ENCODE measurements at regions of chr20 and their contacts with region 1.

Region 1: GRCh38 chr20:44310664-44311639 is at the start of gene FITM2:
- DNase-seq: peak; percentile 99
- ATAC-seq: peak; percentile 96
- H3K4me3 Mint-ChIP-seq: peak within 1 kb of the TSS; percentile 86
- H3K27ac Mint-ChIP-seq: peak within 1 kb of the TSS; percentile 66
- H3K4me1 Mint-ChIP-seq: peaks cover 17% of the 10 kb centered on the region
- H3K27me3 Mint-ChIP-seq: no peaks in the 10 kb centered on the region
- total RNA-seq, gene FITM2: 2.1 to 2.2 TPM

Region 2: GRCh38 chr20:44109951-44110361 is 201.0 kb before region 1 on chr20:
- CTCF ChIA-PET with region 1: no interaction called
- POLR2A ChIA-PET with region 1: no interaction called
- intact Hi-C with region 1: loop called in 1 of 2 experiments (anchors 10 kb)
- DNase-seq: no peak
- ATAC-seq: no peak
- H3K4me3 Mint-ChIP-seq: no peak overlapping the region
- H3K27ac Mint-ChIP-seq: no peak overlapping the region
- H3K4me1 Mint-ChIP-seq: no peaks in the 10 kb centered on the region
- H3K27me3 Mint-ChIP-seq: peaks cover 39% of the 10 kb centered on the region

Region 3: DNA sequence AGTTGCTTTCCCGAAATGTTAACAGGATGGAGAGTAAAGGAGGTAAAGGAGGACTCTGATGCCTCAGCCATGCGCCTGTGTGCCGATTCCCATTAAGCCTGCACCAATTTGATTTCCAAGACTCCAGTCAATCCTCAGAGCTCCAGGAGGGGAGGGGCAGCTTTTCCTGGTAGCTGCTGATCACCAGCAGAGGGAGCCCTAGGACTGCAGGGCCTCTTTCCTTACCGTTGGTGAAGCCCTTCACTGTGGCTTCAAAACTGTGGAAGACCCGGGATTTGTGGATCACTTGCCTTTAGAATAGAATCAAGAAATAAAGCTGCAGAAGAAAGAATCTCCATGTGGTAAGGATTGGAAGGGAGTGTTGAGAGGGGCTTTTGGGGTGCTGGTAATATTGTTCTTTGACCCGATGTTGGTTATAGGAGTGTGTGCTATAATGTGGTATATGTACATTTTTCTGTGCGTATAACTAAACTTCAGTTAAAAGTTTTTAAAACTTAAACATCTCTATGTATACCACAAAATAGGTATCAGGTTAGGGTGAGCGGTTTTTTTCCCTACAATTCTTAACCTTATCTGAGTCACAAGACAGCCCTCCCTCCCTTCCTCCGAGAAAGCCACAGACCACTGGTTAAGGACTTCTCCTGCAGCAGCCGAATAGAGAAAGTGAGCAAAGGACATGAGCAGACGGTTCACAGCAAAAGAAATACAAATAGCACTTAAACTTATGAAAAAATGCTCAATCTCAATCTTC is 93.4 kb before region 1 on chr20:
- CTCF ChIA-PET with region 1: interaction called, 346 read pairs
- POLR2A ChIA-PET with region 1: interaction called, 11 read pairs
- intact Hi-C with region 1: loop called (anchors 1 kb)
- DNase-seq: peak; percentile 82
- ATAC-seq: peak; percentile 46
- H3K4me3 Mint-ChIP-seq: peak overlapping the region; percentile 65
- H3K27ac Mint-ChIP-seq: peak overlapping the region; percentile 83
- H3K4me1 Mint-ChIP-seq: peaks cover 50% of the 10 kb centered on the region
- H3K27me3 Mint-ChIP-seq: no peaks in the 10 kb centered on the region

Region 4: GRCh38 chr20:44326391-44327159 is 15.6 kb after region 1 on chr20:
- CTCF ChIA-PET with region 1: interaction called, 27 read pairs
- POLR2A ChIA-PET with region 1: no interaction called
- intact Hi-C with region 1: loop called in 1 of 2 experiments (anchors 1 kb)
- DNase-seq: peak; percentile 56
- ATAC-seq: peak; percentile 64
- H3K4me3 Mint-ChIP-seq: no peak overlapping the region
- H3K27ac Mint-ChIP-seq: no peak overlapping the region
- H3K4me1 Mint-ChIP-seq: no peaks in the 10 kb centered on the region
- H3K27me3 Mint-ChIP-seq: peaks cover 7% of the 10 kb centered on the region

Region 5: DNA sequence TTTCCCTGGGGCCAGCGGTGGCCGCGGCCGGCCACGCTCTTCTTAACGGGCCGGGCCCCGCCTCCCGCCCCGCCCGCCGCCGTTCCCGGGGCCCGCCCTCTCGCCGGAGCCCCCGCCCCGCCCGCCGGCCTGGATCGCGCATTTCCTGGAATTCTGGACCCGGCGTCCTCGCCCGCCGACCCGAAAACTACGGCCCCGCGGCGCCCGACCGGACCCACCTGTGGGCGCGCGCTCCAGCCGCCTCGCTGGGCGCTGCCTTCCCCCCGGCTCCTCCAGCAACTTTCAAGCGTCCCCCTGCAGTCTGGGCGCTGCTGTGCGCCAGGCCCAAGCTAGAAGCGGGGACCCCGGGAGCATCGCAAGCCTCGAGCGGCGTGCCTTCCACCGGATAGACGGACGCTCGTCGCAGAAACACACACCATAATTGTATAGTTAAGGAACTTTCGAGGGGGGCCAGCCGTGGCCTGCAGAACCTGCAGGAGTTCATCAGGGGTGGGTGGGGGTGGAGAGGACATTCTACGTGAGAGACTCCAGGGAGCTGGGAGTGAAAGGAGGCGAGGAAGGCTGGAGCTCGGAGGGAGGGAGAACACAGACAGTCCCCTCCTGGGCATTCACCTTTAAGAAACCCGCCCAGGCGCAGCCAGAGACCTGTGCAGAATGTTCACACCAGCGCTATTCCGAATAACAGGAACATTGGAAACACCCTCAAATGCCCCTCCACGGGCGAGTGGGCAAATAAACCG is 340.9 kb after region 1 on chr20 and contains the start of gene ADA:
- CTCF ChIA-PET with region 1: no interaction called
- POLR2A ChIA-PET with region 1: interaction called, 5 read pairs
- intact Hi-C with region 1: loop called in 1 of 2 experiments (anchors 5 kb)
- DNase-seq: peak; percentile 65
- ATAC-seq: peak; percentile 48
- H3K4me3 Mint-ChIP-seq: peak within 1 kb of the TSS; percentile 78
- H3K27ac Mint-ChIP-seq: peak within 1 kb of the TSS; percentile 89
- H3K4me1 Mint-ChIP-seq: peaks cover 50% of the 10 kb centered on the region
- H3K27me3 Mint-ChIP-seq: no peaks in the 10 kb centered on the region
- total RNA-seq, gene ADA: 33.8 to 37.8 TPM